ENCODE measurements at regions of chr3 and their contacts with region 1.

Region 1: DNA sequence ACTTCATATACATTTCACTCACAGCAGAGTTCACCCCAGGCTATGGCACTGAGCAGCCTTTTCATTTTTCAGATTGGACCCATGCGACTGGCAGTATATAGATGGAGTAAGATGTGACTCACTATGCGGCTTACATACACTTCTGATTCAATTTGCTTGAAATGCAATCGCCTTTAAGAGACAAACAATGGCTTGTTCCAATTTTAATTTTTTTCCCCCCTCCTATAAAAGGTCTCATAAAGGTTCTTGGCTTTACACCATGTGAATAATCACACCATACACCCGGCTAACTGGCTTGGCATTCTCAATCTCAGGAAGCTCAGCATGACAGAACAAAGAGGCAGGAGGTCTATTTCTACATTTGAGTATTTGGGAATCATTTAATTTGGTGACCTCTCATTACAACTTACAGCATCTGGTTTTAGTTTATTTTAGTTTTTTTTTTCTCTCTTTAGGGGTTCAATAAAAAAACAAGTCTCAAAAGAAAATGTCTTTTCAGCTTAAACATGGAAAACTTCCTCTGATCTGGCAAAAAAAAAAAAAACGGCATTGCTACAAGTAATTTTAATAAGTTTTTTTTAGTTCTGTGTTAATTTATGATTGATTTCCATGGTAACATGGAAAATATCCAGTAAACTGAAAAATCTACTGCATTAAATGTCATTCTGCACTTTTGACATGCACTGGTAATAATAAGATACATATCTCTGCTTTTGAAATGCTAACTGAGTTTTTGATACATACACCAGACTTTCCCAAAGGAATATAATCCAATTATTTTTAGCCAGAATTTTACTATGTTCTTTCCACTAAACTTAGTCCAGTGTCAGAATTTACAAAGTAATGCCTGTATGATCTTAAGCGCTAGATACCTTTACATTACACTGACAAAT is 38.8 kb downstream of the GADL1 start:
- DNase-seq: no peak
- ATAC-seq: no peak
- H3K4me3 ChIP-seq: no peak overlapping the region
- H3K27ac ChIP-seq: no peak overlapping the region
- H3K4me1 ChIP-seq: no peaks in the 10 kb centered on the region
- H3K27me3 ChIP-seq: no peaks in the 10 kb centered on the region

Region 2: DNA sequence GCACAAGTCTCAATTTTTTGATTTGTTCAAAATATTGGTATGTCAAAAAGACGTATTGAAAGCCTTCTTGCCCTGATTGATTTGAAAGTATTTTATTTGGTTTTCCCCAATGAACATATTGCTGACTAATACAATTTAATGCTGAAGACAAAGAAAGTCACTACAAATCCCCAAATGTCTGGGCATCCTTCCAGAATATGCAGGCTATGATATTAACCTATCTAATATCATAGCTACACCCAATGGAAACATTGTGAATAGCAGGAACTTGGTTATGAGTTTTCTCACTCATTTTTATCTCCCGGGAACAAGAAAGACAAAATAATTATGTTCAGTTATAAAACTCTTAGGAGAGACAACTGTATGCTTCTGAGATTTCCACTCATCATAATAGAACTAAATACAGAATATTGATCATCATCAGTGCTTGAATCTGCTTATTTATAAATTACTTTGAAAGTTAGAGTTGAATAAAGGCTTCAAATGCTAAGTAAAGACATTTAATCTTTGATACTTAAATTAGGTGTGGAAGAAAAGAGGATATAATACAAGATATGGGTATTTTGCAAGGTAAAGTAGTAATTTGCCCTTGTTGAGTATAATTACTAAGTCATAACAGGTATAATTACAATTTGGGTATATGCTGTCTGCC is 1090.9 kb before region 1 on chr3:
- intact Hi-C with region 1: no loop called
- DNase-seq: no peak
- ATAC-seq: peak; percentile 76
- H3K4me3 ChIP-seq: no peak overlapping the region
- H3K27ac ChIP-seq: no peak overlapping the region
- H3K4me1 ChIP-seq: peaks cover 0 to 7% of the 10 kb centered on the region in 2 donors
- H3K27me3 ChIP-seq: no peaks in the 10 kb centered on the region

Region 3: DNA sequence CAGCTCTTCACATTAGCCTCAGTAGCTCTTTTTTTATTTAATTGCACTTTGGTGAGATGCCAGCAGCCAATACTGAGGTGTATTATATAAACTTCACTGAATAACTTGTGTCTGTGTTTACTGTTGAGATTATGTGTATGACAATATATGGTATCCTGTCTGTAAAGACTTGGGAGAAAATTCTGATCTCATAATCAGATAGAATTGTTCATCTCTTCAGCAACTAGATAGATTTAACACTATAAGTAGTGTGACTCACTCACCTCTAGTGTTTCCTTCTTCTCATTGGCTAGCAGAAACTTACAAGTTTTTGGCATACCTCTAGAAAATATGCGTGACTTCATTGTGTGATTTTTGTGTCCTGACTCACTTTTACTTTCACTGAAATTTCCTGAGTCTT is 316.9 kb before region 1 on chr3:
- intact Hi-C with region 1: no loop called
- DNase-seq: no peak
- ATAC-seq: no peak
- H3K4me3 ChIP-seq: no peak overlapping the region
- H3K27ac ChIP-seq: no peak overlapping the region
- H3K4me1 ChIP-seq: no peaks in the 10 kb centered on the region
- H3K27me3 ChIP-seq: no peaks in the 10 kb centered on the region

Region 4: GRCh38 chr3:30658328-30659052 is 197.2 kb before region 1 on chr3:
- intact Hi-C with region 1: no loop called
- DNase-seq: no peak
- ATAC-seq: peak; percentile 41
- H3K4me3 ChIP-seq: no peak overlapping the region
- H3K27ac ChIP-seq: peak overlapping the region; percentile 92 to 97
- H3K4me1 ChIP-seq: peaks cover 20 to 21% of the 10 kb centered on the region in 2 donors
- H3K27me3 ChIP-seq: no peaks in the 10 kb centered on the region

Region 5: GRCh38 chr3:30811151-30811795 is 44.4 kb before region 1 on chr3:
- intact Hi-C with region 1: loop called in 1 of 2 experiments (anchors 2 kb)
- DNase-seq: no peak
- ATAC-seq: peak; percentile 49
- H3K4me3 ChIP-seq: peak overlapping the region; percentile 23 to 59
- H3K27ac ChIP-seq: peak overlapping the region in 1 of 2 donors; percentile 61
- H3K4me1 ChIP-seq: peaks cover 0 to 5% of the 10 kb centered on the region in 2 donors
- H3K27me3 ChIP-seq: no peaks in the 10 kb centered on the region

Region 6: DNA sequence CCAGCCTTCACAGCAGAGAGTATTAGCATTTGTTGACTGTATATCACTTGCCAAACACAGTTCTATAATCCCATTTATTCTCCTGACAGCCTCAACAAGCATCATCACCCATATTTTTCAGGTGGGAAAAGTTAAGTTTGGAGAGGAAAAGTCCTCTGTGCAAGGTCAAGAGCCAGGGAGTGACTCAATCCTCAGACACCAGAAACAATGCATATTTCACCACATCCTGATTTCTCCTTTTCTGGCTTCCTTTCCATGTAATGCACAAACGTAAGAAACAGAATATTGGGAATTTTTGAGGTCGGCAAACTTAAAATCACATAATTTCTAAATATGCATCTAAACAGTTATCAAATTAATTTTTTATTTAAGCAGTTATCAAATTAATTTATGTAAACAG is 154.8 kb after region 1 on chr3:
- intact Hi-C with region 1: no loop called
- DNase-seq: no peak
- ATAC-seq: no peak
- H3K4me3 ChIP-seq: no peak overlapping the region
- H3K27ac ChIP-seq: no peak overlapping the region
- H3K4me1 ChIP-seq: no peaks in the 10 kb centered on the region
- H3K27me3 ChIP-seq: no peaks in the 10 kb centered on the region

Measured in aorta (tissue), 5 donors.